ENCODE measurements at regions of chr11 and their contacts with region 1.

Region 1: GRCh38 chr11:85664615-85665481 is at the start of gene CREBZF:
- DNase-seq: peak; percentile 98
- H3K4me3 Mint-ChIP-seq: peak within 1 kb of the TSS; percentile 97
- H3K27ac Mint-ChIP-seq: peak within 1 kb of the TSS; percentile 99
- H3K4me1 Mint-ChIP-seq: peaks cover 29% of the 10 kb centered on the region
- H3K27me3 Mint-ChIP-seq: peaks cover 2% of the 10 kb centered on the region
- total RNA-seq, gene CREBZF: 50.9 and 54.5 TPM in 2 replicates

Region 2: DNA sequence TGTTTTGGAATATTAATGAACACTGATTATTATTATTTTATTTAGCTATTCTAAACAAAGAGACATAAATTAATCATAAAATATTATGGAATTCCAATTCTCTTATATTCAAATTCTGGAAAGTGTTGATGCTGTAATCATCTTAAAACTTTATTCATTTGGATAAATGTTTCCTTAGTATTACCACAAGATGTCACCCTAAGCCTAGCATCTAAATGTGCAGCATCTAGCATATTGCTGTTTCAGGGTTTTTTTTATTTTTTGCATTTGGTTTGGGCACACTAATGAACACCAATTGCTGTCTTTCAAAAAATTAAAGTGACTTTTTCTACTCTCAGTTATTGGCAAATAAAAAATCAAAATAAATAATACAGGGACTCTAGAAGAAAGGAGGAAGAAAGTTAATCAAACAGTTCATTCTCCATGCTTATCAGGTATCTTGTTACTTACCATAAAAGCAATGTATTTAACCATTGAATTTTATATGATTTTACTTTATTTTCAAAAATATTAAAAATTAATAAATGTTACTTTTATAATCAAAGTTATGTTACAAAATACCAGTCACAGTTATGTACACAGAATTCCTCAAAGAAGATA is 69.5 kb before region 1 on chr11:
- intact Hi-C with region 1: loop called (anchors 2 kb)
- DNase-seq: peak; percentile 65
- H3K4me3 Mint-ChIP-seq: no peak overlapping the region
- H3K27ac Mint-ChIP-seq: no peak overlapping the region
- H3K4me1 Mint-ChIP-seq: no peaks in the 10 kb centered on the region
- H3K27me3 Mint-ChIP-seq: peaks cover 15% of the 10 kb centered on the region

Region 3: DNA sequence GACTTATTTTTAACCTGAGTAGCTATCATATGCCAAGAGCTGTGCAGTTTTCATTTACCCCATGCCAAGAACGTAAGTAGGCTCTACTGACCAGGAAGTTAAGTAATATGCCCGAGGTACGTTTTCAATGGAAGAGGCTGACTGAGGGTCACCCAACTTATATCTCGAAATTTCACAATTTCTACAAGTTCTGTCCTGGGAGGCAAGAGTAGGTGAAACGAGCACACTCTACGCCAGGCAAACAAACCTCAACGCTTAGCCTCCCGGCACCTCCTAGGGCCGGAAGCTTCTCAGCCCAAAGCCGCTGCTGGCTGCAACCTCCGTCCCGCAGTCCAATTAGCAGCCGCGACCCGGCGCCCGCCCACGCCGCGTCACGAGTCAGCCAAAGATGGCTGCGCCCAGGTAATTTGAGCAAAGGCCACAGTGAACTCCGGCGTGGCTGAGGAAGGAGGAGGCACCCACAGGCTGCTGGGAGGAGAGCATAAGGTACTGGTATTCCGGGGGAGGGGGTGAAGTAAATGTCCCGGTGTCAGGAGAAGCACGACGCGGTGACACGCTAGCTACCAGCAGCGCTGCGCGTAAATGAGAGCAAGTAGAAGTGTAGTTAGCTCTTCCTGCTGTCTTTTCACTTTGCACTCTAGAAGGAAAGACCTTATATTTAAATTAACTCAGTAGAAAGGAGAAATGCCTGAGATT is 17.1 kb before region 1 on chr11 and contains the start of gene TMEM126A:
- intact Hi-C with region 1: loop called (anchors 1 kb)
- DNase-seq: peak; percentile 97
- H3K4me3 Mint-ChIP-seq: peak within 1 kb of the TSS; percentile 98
- H3K27ac Mint-ChIP-seq: peak within 1 kb of the TSS; percentile 98
- H3K4me1 Mint-ChIP-seq: peaks cover 15% of the 10 kb centered on the region
- H3K27me3 Mint-ChIP-seq: peaks cover 23% of the 10 kb centered on the region
- total RNA-seq, gene TMEM126A: 52.1 and 52.5 TPM in 2 replicates

Region 4: DNA sequence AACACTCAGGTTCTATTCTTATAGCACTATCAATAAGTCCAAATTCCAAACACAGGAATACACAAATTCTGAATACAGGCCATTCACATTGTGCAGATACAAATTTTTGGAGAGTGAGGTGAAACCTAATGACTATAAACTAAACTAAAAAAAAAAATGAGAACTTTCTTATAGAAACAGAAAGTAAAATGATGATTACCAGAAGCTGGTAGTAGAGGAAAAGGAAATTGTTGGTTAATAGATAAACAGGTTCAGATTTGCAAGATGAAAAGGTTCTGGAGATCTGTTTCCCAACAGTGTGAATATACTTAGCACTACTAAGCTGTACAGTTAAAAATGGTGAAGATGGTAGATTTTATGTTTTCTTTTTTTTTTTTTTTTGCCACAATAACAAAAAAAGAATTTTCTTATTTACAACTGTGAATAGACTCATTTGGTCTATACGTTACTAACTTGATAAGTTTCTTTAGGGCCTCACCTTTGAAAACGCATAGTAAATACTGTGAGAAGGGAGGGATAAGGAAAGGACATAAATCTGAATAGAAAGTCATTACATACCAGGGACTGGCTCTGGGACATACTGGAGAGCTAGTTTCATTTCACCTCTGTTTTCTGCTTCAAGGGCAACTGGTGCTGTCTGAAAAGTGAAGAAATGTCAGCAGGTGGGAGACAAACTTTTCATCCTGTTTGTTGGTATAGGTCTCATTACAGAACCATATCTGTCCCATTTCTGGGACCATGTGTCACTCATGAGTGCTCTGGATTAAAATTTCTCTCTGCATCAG is 35.3 kb after region 1 on chr11:
- intact Hi-C with region 1: no loop called
- DNase-seq: peak; percentile 58
- H3K4me3 Mint-ChIP-seq: peak overlapping the region; percentile 36
- H3K27ac Mint-ChIP-seq: peak overlapping the region; percentile 80
- H3K4me1 Mint-ChIP-seq: peaks cover 32% of the 10 kb centered on the region
- H3K27me3 Mint-ChIP-seq: no peaks in the 10 kb centered on the region

Region 5: DNA sequence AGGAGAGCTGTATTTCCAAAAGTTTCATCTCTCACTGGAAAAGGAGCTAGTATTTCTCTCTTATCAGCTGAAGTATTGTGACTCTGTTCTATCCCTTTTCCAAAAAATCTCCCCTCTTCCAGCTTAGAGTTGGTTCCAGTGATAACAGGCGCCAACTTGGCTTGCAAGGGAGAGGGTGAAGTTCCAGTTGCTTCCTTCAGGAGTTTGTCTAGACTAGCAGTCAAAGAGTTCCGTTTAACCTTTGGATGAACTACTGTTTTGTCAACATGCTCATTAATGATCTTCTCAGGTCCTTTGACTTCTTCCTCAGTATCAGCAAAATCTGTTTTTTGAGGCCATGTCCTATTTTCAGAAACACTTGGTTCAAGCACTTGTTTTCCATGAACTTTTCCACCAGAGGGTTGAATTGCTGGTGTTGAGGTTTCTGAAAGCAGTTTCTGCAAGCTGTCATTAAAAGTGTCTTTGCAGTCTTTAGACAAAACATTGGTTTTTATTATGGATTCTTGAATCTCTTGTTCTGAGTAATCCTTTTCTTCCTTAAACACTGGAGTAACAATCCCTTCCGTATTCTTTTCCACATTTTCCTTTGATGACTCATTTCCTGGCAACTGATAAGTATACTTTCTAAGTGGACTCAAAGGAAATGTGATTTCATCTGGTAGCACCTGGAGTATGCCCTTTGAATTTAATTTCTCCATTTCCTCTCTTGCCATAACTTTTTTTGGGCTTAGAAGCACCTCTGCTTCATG is 60.8 kb after region 1 on chr11:
- intact Hi-C with region 1: no loop called
- DNase-seq: no peak
- H3K4me3 Mint-ChIP-seq: no peak overlapping the region
- H3K27ac Mint-ChIP-seq: no peak overlapping the region
- H3K4me1 Mint-ChIP-seq: peaks cover 3% of the 10 kb centered on the region
- H3K27me3 Mint-ChIP-seq: no peaks in the 10 kb centered on the region

Region 6: DNA sequence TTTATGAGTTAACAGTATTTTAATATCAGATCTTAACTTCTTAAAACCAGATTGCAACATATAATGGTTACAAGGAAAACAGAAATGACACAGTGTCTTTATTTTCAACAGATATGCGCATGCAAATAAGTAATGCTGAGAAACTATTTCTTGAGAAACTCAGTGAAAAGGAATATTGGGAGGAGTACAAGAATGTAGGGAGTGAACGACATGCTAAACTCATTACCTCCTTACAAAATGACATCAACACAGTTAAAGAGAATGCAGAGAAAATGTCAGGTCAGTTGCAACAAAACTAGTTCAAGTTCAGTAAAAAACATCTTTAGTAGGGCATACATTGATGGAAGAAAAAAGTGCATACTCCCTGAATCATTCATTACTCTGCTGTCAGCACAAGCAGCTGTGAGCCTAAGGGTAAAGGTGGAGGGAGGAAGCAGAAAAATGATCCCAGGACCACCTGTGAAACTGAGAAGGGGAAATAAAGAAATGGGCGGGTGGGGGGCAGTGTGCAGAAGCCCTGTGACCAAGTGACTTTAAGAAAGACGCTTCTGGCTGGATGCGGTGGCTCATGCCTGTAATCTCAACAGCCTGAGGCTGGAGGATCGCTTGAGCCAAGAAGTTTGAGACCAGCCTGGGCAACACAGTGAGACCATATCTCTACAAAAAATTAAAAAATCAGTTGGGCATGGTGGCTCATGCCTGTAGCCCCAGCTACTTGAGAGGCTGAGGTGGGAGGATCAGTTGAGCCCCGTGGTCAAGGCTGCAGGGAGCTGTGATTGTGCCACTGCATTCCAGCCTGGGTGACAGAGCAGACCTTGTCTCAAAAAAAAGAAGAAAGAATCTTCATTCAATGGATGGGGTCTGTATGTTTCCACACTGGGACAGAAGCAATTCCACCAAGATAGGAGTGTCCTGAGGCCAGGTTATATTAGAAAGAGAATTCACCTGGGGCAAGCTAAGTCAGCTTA is 221.5 kb after region 1 on chr11:
- intact Hi-C with region 1: no loop called
- DNase-seq: no peak
- H3K4me3 Mint-ChIP-seq: no peak overlapping the region
- H3K27ac Mint-ChIP-seq: no peak overlapping the region
- H3K4me1 Mint-ChIP-seq: no peaks in the 10 kb centered on the region
- H3K27me3 Mint-ChIP-seq: peaks cover 10% of the 10 kb centered on the region